Caco-2 (cell line): ENCODE measurements at regions of chr19 and their contacts with region 1.

Region 1: GRCh38 chr19:35716801-35717666 is 769 bp upstream of the KMT2B start:
- DNase-seq: peak; percentile 95 to 98
- H3K4me3 ChIP-seq: peak overlapping the region; percentile 91
- H3K4me3 Mint-ChIP-seq: peak overlapping the region; percentile 81
- H3K27ac Mint-ChIP-seq: peak overlapping the region; percentile 82
- H3K4me1 ChIP-seq: peaks cover 8% of the 10 kb centered on the region
- H3K4me1 Mint-ChIP-seq: peaks cover 16% of the 10 kb centered on the region
- H3K27me3 ChIP-seq: no peaks in the 10 kb centered on the region
- H3K27me3 Mint-ChIP-seq: no peaks in the 10 kb centered on the region
- CTCF ChIP-seq: peak; percentile 89 to 94

Region 2: GRCh38 chr19:35509861-35510625 is 207.0 kb before region 1 on chr19:
- CTCF ChIA-PET with region 1: no interaction called
- POLR2A ChIA-PET with region 1: interaction called, 3 read pairs
- intact Hi-C with region 1: loop called (anchors 2 kb)
- DNase-seq: peak; percentile 94 to 98
- H3K4me3 ChIP-seq: peak overlapping the region; percentile 69
- H3K4me3 Mint-ChIP-seq: peak overlapping the region; percentile 99
- H3K27ac Mint-ChIP-seq: peak overlapping the region; percentile 99
- H3K4me1 ChIP-seq: peaks cover 11% of the 10 kb centered on the region
- H3K4me1 Mint-ChIP-seq: peaks cover 6% of the 10 kb centered on the region
- H3K27me3 ChIP-seq: no peaks in the 10 kb centered on the region
- H3K27me3 Mint-ChIP-seq: no peaks in the 10 kb centered on the region
- CTCF ChIP-seq: peak; percentile 97 to 98

Region 3: GRCh38 chr19:35555301-35556005 is 161.6 kb before region 1 on chr19:
- CTCF ChIA-PET with region 1: no interaction called
- POLR2A ChIA-PET with region 1: no interaction called
- intact Hi-C with region 1: loop called (anchors 1 kb)
- DNase-seq: peak in 1 of 2 experiments; percentile 69
- H3K4me3 ChIP-seq: no peak overlapping the region
- H3K4me3 Mint-ChIP-seq: no peak overlapping the region
- H3K27ac Mint-ChIP-seq: no peak overlapping the region
- H3K4me1 ChIP-seq: 0 out of 2 replicates have a peak, but pooled peaks cover 5% of the 10 kb centered on the region
- H3K4me1 Mint-ChIP-seq: no peaks in the 10 kb centered on the region
- H3K27me3 ChIP-seq: no peaks in the 10 kb centered on the region
- H3K27me3 Mint-ChIP-seq: peaks cover 14% of the 10 kb centered on the region
- CTCF ChIP-seq: peak; percentile 42 to 56

Region 4: GRCh38 chr19:35693830-35694599 is 23.0 kb before region 1 on chr19:
- CTCF ChIA-PET with region 1: interaction called, 6 read pairs
- POLR2A ChIA-PET with region 1: interaction called, 3 read pairs
- intact Hi-C with region 1: loop called (anchors 1 kb)
- DNase-seq: peak; percentile 90 to 93
- H3K4me3 ChIP-seq: no peak overlapping the region
- H3K4me3 Mint-ChIP-seq: no peak overlapping the region
- H3K27ac Mint-ChIP-seq: no peak overlapping the region
- H3K4me1 ChIP-seq: no peaks in the 10 kb centered on the region
- H3K4me1 Mint-ChIP-seq: peaks cover 6% of the 10 kb centered on the region
- H3K27me3 ChIP-seq: no peaks in the 10 kb centered on the region
- H3K27me3 Mint-ChIP-seq: no peaks in the 10 kb centered on the region
- CTCF ChIP-seq: peak; percentile 98 to 99

Region 5: DNA sequence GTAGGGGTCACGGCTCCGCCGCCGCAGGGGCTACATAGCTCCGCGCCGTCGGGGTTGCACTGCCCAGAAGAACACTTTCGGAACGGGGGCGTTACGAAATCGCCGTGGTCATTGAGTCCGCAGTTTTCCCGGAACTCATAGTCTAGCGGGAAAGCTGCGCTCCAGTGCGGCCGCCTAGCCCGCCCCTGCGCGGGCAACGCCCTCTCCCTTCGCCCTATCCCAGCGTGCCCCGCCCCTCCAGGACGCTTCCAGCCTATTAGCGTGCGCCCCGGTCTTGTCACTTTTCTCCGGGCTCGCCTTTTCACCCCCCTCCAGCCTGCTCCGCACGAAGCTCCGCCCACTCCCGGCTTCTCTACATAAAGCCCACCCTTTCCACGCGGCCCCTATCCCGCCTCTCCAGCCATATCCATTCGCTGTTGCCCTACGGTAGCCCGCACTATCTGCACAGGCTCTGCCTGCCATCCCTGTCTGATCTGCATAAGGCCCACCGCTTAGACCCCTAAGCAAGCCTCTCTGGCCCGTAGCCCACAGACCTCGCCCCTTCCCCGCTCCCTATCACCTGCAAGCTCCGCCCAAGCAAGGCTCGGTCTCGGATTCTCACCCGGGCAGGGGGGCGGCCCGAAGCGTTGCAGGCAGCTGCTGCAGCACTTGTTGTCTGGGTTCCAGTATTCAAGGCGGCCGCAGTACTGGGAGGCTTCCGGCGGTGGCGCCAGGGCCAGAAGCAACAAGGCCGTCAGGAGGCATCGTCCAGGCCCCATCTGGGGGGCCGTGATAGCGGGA is 23.6 kb after region 1 on chr19:
- CTCF ChIA-PET with region 1: interaction called, 5 read pairs
- POLR2A ChIA-PET with region 1: interaction called, 4 read pairs
- intact Hi-C with region 1: loop called (anchors 1 kb)
- DNase-seq: peak; percentile 99
- H3K4me3 ChIP-seq: peak overlapping the region; percentile 58
- H3K4me3 Mint-ChIP-seq: peak overlapping the region; percentile 97
- H3K27ac Mint-ChIP-seq: peak overlapping the region; percentile 87
- H3K4me1 ChIP-seq: peaks cover 8% of the 10 kb centered on the region; the same call in 1 of the 2 replicates
- H3K4me1 Mint-ChIP-seq: peaks cover 11% of the 10 kb centered on the region
- H3K27me3 ChIP-seq: no peaks in the 10 kb centered on the region
- H3K27me3 Mint-ChIP-seq: no peaks in the 10 kb centered on the region
- CTCF ChIP-seq: peak; percentile 22 to 45

Region 6: DNA sequence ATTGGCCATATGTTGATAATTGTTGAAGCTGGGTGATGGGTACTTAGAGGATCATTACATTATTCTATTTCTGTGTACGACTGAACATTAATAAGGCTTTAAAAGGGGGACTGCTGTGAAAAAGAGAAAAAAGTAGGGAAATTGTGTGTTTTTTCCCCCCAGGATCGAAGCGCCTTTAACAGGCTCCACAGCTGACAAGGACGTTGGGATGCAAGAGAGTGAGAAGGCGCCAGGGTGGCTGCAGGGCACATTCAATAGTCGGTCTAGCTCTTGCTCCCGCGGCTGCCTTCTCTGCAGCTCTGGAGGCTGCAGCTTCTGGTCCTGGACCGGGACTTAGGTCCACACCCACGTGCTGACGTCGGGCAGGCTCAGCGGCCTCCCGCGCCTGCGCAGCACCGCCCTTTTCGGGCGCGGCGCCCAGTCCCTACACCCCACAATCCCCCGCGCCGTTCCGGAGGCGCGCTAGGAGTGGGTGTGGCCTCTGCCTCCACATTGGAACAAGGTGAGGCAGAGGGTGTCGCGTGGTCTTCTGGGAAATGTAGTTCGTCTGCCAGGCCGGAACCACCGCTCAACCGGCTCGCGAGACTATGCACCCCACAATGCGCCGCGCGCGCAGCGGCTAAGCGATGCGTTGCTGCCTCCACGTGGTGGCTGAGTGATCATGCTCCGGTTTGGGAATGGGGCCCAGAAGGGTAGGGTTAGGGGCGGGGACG is 214.3 kb after region 1 on chr19:
- CTCF ChIA-PET with region 1: no interaction called
- POLR2A ChIA-PET with region 1: no interaction called
- intact Hi-C with region 1: loop called (anchors 1 kb)
- DNase-seq: peak; percentile 100
- H3K4me3 ChIP-seq: peak overlapping the region; percentile 29
- H3K4me3 Mint-ChIP-seq: peak overlapping the region; percentile 67
- H3K27ac Mint-ChIP-seq: peak overlapping the region; percentile 3
- H3K4me1 ChIP-seq: peaks cover 8% of the 10 kb centered on the region; the same call in 1 of the 2 replicates
- H3K4me1 Mint-ChIP-seq: peaks cover 14% of the 10 kb centered on the region
- H3K27me3 ChIP-seq: no peaks in the 10 kb centered on the region
- H3K27me3 Mint-ChIP-seq: peaks cover 5% of the 10 kb centered on the region
- CTCF ChIP-seq: peak; percentile 82 to 93